Activated T-helper 2 cell treated with anti-CD3 and anti-CD28 coated beads, Interferon-gamma antibody, Interleukin-2, Interleukin-4, amounts not matched to agents 10 μg/mL and 5 μg/mL and 100 μg/mL, durations not matched to agents 14 hours and 24 hours and 36 hours (primary cell): ENCODE measurements at regions of chr12 and their contacts with region 1.

Region 1: GRCh38 chr12:12786716-12787601 is 1.5 kb downstream of the APOLD1 start:
- DNase-seq: peak; percentile 66
- H3K4me3 Mint-ChIP-seq: peak overlapping the region; percentile 79
- H3K27ac Mint-ChIP-seq: peak overlapping the region; percentile 87
- H3K4me1 Mint-ChIP-seq: peaks cover 34% of the 10 kb centered on the region
- H3K27me3 Mint-ChIP-seq: no peaks in the 10 kb centered on the region

Region 2: GRCh38 chr12:12724661-12725545 is 62.1 kb before region 1 on chr12:
- intact Hi-C with region 1: loop called (anchors 5 kb)
- DNase-seq: peak; percentile 90
- H3K4me3 Mint-ChIP-seq: peak overlapping the region; percentile 88
- H3K27ac Mint-ChIP-seq: peak overlapping the region; percentile 96
- H3K4me1 Mint-ChIP-seq: peaks cover 42% of the 10 kb centered on the region
- H3K27me3 Mint-ChIP-seq: no peaks in the 10 kb centered on the region

Region 3: DNA sequence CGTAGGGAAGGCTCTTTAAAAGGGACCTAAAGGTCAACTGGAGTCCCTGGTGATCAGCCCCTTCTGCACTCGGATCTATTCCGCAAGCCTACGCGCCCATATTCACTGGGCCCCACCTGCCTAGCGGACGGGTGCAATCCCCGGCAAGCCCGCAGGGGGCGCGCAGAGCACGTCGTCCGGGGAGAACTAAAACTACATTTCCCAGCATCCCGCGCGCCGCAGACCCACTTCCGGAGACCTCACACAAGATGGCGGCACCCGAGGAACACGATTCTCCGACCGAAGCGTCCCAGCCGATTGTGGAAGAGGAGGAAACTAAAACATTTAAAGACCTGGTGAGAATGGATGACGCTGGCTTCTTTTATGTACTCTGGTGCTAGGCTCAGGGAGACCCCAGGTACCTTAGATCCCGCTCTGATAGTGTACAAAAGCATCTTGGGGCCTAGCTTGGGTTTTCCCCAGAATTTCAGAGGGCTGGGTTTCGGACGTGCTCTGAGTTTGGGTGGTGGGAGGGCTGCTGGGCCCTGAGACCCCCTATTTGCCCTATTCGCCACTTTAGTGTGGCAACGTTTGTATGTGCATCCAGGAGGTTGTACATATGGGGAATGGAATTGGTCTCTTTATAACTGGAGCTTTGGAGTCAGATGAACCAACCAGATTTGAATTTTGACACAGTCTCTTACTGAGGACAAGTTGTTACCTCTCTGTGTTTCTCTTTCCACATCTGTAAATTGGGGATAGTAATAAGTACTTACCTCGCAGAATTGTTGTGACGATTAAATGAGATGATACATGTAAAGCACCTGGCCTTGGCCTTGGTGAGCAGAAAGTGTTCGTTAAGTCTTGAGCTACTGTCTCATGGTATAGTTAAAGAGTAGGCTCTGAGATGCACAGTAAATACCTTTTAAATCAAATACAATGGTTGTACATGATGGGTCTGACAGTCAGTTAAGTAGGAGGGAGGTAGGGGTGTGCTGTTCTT is 26.5 kb after region 1 on chr12 and contains the start of gene DDX47:
- intact Hi-C with region 1: loop called (anchors 1 kb)
- DNase-seq: peak; percentile 93
- H3K4me3 Mint-ChIP-seq: peak within 1 kb of the TSS; percentile 90
- H3K27ac Mint-ChIP-seq: peak within 1 kb of the TSS; percentile 92
- H3K4me1 Mint-ChIP-seq: peaks cover 43% of the 10 kb centered on the region
- H3K27me3 Mint-ChIP-seq: no peaks in the 10 kb centered on the region
- total RNA-seq, gene DDX47: 114 and 120 TPM in 2 replicates

Region 4: DNA sequence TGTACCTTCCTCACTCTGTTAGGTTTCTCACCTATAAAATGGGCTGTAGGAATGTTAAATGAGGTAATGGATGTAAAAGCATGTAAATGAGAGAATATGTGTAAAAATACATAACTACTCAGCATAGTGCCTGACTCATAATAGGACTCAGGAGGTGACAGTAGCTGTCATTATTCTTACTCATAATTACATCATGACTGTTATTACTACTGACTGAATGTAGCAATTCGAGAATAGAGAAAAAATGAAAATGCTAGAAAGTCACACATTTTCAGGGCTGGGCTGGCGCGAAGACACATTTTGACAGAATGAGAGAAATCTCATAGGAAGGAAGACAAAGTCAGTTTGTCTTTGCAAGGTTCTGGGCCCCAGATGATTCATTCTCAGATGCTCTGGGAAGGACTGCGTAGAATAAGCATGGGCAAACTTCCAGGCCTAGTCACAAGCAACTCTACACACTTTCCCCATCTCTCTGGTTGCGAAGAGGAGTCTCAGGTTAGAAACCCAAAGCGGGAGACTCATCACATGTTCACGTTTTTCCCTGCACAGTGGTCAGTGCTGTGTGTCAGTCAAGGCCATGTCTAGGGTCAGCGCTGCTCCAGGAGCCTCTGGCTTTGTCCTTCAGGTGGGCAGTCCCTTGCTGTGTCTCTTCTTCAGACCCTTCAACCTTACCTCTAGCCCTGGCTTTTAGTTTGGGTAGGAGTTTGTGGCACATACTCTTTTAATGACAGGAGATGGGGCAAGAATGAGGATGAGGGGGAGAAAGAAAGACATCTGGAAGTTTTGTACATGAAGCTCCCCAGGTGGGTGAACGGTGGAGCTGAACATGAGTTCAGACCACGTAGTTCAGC is 112.8 kb after region 1 on chr12:
- intact Hi-C with region 1: loop called (anchors 5 kb)
- DNase-seq: no peak
- H3K4me3 Mint-ChIP-seq: no peak overlapping the region
- H3K27ac Mint-ChIP-seq: peak overlapping the region; percentile 40
- H3K4me1 Mint-ChIP-seq: peaks cover 11% of the 10 kb centered on the region
- H3K27me3 Mint-ChIP-seq: peaks cover 23% of the 10 kb centered on the region

Region 5: GRCh38 chr12:12983420-12984035 is 196.6 kb after region 1 on chr12:
- intact Hi-C with region 1: loop called (anchors 10 kb)
- DNase-seq: no peak
- H3K4me3 Mint-ChIP-seq: no peak overlapping the region
- H3K27ac Mint-ChIP-seq: no peak overlapping the region
- H3K4me1 Mint-ChIP-seq: no peaks in the 10 kb centered on the region
- H3K27me3 Mint-ChIP-seq: no peaks in the 10 kb centered on the region

Region 6: DNA sequence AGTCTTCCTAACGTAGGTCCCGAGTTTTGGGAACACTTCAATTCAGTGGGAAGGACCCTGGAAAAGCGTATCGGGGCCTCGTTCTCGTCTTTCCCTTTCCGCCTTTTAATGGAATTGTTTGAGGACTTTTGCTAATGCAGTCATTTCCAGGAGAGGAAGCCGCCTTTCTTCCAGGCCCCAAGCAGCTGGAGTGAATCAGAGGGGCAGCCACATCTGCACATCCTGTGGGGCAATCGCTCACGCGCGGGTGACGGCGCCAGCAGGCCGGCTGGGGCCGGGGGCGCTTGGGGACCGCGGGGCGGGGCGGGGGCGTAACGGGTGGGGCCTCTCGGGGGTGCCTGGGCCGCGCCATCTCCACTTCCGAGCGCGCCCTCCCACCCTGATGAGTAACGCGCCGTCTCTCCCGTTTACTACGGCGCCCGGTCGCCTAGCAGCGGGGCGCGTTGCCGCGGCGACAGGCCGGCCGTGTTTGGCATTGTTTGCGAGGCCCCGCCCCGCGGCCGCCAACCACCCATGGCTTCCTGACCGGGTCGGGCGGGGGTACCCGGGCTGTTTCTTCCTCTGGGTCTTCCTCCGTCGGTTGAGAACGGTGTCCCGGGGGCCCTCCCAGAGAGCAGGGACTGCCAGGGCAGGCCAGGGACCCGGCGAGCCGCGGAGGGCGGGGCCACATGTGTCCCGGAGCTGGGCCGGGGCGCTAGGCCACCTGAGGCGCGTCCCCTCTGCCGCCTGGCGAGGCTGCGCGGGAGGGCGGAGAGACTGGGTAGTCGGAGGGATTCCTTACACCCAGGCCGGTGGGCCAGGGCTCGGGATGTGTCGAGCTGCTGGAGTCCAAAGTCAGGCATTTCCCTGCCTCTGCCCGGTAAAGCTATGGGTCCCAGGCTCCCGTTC is 314.2 kb after region 1 on chr12:
- intact Hi-C with region 1: loop called (anchors 5 kb)
- DNase-seq: peak; percentile 89
- H3K4me3 Mint-ChIP-seq: peak overlapping the region; percentile 71
- H3K27ac Mint-ChIP-seq: peak overlapping the region; percentile 75
- H3K4me1 Mint-ChIP-seq: peaks cover 47% of the 10 kb centered on the region
- H3K27me3 Mint-ChIP-seq: peaks cover 5% of the 10 kb centered on the region

Region 7: DNA sequence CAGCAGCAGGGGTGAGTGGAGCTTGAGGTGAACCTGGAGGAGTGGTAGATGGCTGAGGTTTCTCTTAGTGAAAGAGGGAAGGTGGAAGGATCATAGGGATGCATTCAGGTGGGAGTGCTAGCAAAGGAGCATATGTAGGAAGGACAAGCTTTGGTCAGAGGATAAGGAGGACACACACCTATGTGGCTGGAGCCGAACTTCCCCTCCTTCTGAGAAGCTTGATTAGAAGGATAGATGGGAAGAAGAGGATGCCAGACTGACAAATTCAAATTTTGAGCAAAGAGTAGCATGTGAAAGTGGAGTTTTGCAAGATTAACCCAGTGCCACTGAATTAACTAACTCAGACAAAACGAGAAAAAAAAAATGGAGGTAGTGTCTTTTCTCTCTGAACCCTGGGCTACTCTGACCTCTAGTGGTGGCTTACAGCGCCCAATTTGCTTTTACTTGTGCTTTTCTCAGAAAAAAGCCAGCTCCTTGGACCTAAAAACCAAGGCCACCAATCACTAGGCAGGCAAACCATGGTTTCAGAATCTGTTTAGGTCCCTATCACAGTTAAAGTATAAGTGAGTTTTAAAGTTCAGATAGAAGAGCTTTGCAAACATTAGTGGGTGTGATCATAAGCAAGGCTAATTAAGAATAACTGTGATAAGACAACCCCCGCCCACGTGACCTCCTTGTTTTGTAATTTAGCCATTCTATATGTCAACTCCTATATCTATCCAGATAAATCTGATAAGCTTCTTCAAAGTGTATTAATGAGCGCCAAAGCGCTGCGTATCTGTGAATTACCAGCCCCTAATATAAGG is 425.1 kb after region 1 on chr12:
- intact Hi-C with region 1: loop called (anchors 5 kb)
- DNase-seq: peak; percentile 58
- H3K4me3 Mint-ChIP-seq: no peak overlapping the region
- H3K27ac Mint-ChIP-seq: no peak overlapping the region
- H3K4me1 Mint-ChIP-seq: peaks cover 26% of the 10 kb centered on the region
- H3K27me3 Mint-ChIP-seq: peaks cover 1% of the 10 kb centered on the region